AG04449 (cell line): ENCODE measurements at regions of chr17 and their contacts with region 1.

Region 1: DNA sequence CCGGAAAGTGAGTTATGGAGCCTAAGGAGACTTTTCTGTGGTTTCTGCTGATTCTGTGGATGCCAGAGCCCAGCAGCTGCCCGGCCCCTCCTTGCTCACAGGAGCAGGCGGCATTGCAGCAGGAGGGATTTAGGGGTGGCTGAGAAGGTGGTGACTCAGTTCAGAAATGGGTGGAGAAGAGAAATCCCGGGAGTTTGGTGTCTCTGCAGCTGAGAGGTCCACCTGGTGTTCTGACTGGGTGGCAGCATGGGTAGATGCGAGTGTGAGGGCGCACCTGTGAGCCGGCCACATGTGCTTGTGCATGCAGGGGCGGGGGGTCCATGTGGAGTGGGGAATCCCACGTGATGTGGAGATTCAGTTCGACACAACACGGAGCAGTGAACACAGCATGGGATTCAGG is 16.1 kb upstream of the SPPL2C start:
- DNase-seq: no peak
- H3K4me3 ChIP-seq: no peak overlapping the region
- CTCF ChIP-seq: no peak

Region 2: GRCh38 chr17:45394913-45395568 is 433.6 kb before region 1 on chr17:
- CTCF ChIA-PET with region 1: interaction called, 14 read pairs
- POLR2A ChIA-PET with region 1: no interaction called
- DNase-seq: no peak
- H3K4me3 ChIP-seq: peak overlapping the region; percentile 51
- CTCF ChIP-seq: peak; percentile 81

Region 3: DNA sequence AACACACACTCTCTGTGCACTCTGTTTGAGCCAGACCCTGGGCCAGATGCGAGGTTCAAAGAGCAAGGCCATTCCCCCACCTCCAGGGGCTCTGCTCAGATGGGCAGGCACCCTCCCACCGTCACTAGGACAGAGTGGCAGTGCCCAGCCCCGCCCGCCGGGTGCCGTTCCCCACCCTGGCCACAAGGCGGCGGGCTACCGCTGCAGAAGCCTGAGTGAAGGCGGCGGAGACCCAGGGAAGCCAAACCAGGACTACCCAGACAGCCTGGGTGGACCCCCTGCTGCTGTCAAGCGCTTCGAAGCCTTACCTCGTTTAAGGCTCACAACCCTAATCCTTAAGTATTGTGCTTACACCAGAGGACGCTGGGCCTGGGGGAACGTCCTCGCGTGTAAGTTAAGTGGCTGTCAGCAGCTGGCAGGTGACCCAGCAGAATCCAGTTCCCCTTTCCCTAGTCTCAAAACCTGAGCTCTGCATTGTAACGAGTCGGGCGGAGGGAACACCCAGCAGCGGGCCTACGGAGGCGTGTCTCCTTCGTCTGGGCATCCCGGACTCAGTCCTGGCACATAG is 400.5 kb before region 1 on chr17:
- CTCF ChIA-PET with region 1: interaction called, 14 read pairs
- POLR2A ChIA-PET with region 1: no interaction called
- DNase-seq: no peak
- H3K4me3 ChIP-seq: no peak overlapping the region
- CTCF ChIP-seq: peak; percentile 99

Region 4: DNA sequence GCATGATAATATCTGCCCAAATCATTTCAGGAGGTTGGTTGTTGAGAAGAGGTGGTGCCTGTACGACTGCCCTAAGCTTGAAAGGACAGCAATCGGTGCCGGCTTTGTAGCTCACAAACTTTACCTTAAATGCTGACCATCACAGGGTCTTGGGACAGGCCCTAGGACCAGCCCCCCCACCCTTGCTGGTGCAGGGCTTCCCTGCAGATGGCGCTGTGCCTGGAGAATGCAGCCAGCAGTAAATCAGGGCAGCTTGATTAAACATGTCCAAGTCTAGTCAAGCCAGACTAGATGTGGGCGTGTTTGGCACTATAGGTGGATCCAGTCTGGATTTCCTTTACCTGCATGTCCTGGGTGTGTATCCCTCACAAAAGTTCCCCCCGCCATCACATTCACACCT is 180.0 kb before region 1 on chr17:
- CTCF ChIA-PET with region 1: interaction called, 34 read pairs
- POLR2A ChIA-PET with region 1: no interaction called
- DNase-seq: no peak
- H3K4me3 ChIP-seq: no peak overlapping the region
- CTCF ChIP-seq: no peak

Region 5: GRCh38 chr17:45812102-45812501 is 16.5 kb before region 1 on chr17:
- CTCF ChIA-PET with region 1: interaction called, 12 read pairs
- POLR2A ChIA-PET with region 1: no interaction called
- DNase-seq: no peak
- H3K4me3 ChIP-seq: no peak overlapping the region
- CTCF ChIP-seq: no peak

Region 6: DNA sequence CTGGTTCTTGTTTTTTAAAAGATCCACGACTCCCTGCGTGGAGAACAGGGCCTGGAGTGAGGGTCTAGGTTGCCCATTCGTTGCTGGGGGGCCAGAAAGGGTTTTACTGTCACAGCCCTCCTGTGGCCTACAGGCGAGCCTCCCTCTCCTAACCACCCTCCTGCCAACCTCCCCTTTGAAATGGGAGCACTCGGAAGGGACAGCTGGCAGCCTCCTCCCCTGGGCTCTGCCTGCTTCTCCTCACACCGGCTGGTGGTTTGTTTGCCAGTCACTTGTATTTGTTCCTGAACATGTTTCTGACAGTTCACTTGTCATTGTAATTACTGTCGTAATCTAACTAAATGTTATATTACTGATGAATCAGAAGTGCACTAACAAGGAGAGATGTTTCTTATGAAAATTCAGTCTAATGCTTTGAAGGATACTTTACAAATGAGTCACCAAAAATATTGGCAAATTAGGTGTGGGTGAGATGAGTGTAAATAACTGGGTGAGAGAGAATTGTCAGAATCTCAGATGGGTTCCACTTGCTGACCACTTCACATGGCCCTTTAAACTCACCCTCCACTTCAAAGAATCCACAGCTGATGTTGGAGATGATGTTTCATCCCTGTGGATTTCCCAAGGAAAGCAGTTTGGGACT is 13.4 kb after region 1 on chr17:
- CTCF ChIA-PET with region 1: interaction called, 23 read pairs
- POLR2A ChIA-PET with region 1: no interaction called
- DNase-seq: no peak
- H3K4me3 ChIP-seq: no peak overlapping the region
- CTCF ChIP-seq: no peak

Region 7: DNA sequence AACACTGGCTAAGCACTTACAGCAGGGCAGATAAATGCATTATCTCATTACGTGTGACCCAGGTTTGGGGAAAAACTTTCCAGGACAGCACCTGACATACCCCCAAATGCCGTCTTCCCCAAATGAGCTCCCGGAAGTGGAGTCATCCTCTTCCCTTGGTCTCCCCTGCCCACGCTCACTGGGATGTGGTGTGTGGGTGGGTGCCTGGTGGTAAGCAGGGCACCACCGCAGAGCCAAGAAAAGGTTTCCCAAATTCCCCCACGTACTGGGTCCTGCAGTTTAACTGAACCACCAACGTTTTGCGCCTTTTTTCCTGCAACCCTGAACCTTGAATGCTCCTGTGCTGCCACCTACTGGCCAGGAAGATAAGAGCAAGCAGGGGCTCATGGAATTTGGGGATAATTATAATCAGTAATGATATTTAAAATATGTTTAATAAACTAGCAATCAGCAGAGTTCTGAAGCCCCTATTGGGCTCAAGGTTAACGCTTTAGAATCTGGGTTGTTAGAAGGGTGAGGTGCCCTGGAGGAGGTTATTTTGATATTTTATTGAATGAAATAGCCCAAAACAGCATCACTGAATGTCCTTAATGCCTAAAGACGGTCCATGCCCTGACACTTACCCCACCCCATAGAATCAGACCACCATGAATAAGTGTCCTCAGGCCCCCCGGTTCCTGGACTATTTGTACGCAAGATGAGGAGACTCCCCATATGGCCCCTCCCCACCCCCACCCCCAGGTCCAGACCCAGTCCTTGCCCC is 24.1 kb after region 1 on chr17:
- CTCF ChIA-PET with region 1: interaction called, 24 read pairs
- POLR2A ChIA-PET with region 1: no interaction called
- DNase-seq: no peak
- H3K4me3 ChIP-seq: no peak overlapping the region
- CTCF ChIP-seq: peak; percentile 79

Region 8: DNA sequence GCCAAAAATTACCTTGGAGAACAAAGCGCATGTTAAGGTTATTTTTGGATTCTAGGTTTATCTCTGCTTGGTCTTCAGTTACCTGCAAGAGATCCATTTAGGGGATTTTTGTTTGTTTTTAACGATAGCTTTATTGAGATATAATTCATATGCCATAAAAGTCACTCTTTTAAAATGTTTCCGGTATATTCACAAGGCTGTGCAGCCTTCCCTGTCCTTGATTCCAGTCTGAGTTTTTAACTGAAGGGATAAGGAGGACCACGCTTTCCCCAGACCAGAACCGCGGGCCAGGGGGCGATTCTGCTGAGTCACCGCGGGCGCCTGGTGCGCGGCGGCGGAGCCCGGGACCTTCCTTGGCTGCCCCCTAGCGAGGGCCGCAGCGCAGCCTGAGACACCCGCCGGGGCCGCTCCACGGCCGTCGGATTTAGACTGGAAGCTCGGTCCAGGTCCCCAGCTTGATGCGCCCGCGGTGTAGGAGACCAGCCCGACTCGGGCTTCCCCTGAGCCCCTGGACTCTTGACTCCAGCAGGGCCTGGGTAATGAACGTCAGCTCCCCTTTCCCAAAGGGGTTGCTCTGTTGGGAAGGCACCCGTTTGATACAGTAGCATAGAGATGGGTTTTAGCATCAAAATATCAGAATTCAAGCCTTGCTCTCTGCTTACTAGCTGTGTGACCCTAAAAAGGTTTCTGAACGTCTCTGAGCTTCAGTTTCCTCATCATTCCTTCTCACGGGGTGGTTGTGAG is 120.4 kb after region 1 on chr17:
- CTCF ChIA-PET with region 1: no interaction called
- POLR2A ChIA-PET with region 1: no interaction called
- DNase-seq: no peak
- H3K4me3 ChIP-seq: no peak overlapping the region
- CTCF ChIP-seq: peak; percentile 89